Mucosa of descending colon (tissue), 3 donors: ENCODE measurements at regions of chr11 and their contacts with region 1.

Region 1: DNA sequence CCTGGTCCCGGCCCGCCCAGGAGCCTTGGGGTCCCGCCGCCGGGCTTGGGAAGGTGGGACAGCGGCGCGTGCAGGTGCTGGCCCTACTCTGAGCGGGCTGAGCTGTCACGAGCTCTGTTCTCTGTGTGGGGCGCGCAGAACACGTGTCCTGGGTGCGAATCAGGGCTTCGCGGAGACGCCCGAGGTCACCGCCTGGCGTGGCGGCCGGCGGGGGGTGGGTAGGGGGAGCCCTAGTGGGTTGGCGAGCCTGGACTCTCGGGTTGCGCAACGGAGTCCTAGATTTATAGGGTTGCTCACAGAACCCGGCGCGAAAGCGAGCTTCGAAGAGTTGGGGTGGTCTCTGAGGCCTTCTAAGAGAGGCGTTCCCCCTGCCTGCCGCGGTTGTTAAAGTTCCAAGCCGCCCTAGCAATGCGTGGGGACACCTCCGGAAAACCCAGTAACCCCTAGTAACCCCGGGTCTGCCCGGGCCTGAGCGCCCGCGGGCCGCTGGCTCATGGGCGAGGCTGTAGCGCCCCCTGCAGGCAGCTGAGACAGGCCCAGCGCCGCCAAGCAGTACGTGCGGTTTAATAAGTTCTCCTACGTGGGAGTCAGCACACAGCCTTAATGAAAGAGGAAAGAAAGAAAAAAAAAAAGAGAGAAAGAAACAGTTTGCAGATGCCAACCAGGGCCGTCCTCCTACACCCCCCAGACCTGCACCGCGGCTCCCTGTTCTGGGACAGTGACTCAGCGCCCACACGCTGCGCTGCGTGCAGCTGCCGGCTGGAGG is 2.8 kb downstream of the ADM start:
- DNase-seq: peak; percentile 89 to 90 (median 90)
- ATAC-seq: peak; percentile 65
- H3K4me3 ChIP-seq: peak overlapping the region; percentile 37
- H3K4me1 ChIP-seq: peaks cover 27% of the 10 kb centered on the region
- CTCF ChIP-seq: peak; percentile 95

Region 2: DNA sequence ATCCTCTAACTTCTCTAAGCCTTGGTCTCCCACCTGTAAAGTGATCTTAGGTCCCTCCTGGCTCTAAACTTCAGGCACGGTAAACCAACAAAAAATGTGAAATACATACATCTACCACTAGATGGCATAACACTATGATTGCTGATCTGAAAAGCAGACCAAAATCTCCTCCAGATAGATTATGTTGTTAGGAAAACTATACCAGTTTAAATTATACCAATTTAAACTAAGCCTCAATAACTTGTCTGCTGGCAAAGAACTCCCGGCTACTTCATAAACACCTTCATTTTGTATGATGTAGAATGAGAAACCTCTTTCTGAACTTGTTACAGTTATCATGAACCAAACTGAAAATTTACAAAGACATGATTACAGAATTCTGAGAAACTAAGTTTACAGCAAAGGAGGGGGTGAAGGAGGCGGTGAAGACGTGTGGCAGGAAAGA is 99.5 kb before region 1 on chr11:
- intact Hi-C with region 1: loop called (anchors 5 to 10 kb)
- DNase-seq: no peak
- ATAC-seq: peak; percentile 78
- H3K4me3 ChIP-seq: no peak overlapping the region
- H3K4me1 ChIP-seq: no peaks in the 10 kb centered on the region
- CTCF ChIP-seq: no peak